ENCODE measurements at regions of chr20 and their contacts with region 1.

Region 1: GRCh38 chr20:62500237-62500864 is 24.6 kb upstream of the GATA5 start:
- DNase-seq: peak; percentile 66 to 84 (median 81)
- H3K4me3 ChIP-seq: no peak overlapping the region
- H3K27ac ChIP-seq: no peak overlapping the region
- H3K4me1 ChIP-seq: no peaks in the 10 kb centered on the region
- H3K27me3 ChIP-seq: no peaks in the 10 kb centered on the region
- CTCF ChIP-seq: peak; percentile 43 to 84 (median 74)
- EP300 ChIP-seq: no peak
- POLR2A ChIP-seq: no peak

Region 2: GRCh38 chr20:62603021-62603906 is 102.9 kb after region 1 on chr20:
- intact Hi-C with region 1: no loop called
- DNase-seq: peak in 1 of 5 donors; percentile 28
- H3K4me3 ChIP-seq: no peak overlapping the region
- H3K27ac ChIP-seq: no peak overlapping the region
- H3K4me1 ChIP-seq: peaks cover 4% of the 10 kb centered on the region
- H3K27me3 ChIP-seq: no peaks in the 10 kb centered on the region
- CTCF ChIP-seq: no peak
- EP300 ChIP-seq: no peak
- POLR2A ChIP-seq: no peak

Region 3: GRCh38 chr20:62616728-62617621 is 116.6 kb after region 1 on chr20:
- intact Hi-C with region 1: loop called in 3 of 4 experiments (anchors 2 to 5 kb)
- DNase-seq: peak; percentile 56 to 83 (median 71)
- H3K4me3 ChIP-seq: no peak overlapping the region
- H3K27ac ChIP-seq: no peak overlapping the region
- H3K4me1 ChIP-seq: no peaks in the 10 kb centered on the region
- H3K27me3 ChIP-seq: no peaks in the 10 kb centered on the region
- CTCF ChIP-seq: peak; percentile 70 to 77 (median 77)
- EP300 ChIP-seq: no peak
- POLR2A ChIP-seq: no peak

Region 4: GRCh38 chr20:62782149-62782892 is 282.0 kb after region 1 on chr20:
- intact Hi-C with region 1: loop called in 3 of 4 experiments (anchors 10 kb)
- DNase-seq: no peak
- H3K4me3 ChIP-seq: no peak overlapping the region
- H3K27ac ChIP-seq: no peak overlapping the region
- H3K4me1 ChIP-seq: no peaks in the 10 kb centered on the region
- H3K27me3 ChIP-seq: no peaks in the 10 kb centered on the region
- CTCF ChIP-seq: no peak
- EP300 ChIP-seq: no peak
- POLR2A ChIP-seq: no peak

Measured in ovary (tissue), 10 donors.